ENCODE measurements at regions of chr11 and their contacts with region 1.

Region 1: DNA sequence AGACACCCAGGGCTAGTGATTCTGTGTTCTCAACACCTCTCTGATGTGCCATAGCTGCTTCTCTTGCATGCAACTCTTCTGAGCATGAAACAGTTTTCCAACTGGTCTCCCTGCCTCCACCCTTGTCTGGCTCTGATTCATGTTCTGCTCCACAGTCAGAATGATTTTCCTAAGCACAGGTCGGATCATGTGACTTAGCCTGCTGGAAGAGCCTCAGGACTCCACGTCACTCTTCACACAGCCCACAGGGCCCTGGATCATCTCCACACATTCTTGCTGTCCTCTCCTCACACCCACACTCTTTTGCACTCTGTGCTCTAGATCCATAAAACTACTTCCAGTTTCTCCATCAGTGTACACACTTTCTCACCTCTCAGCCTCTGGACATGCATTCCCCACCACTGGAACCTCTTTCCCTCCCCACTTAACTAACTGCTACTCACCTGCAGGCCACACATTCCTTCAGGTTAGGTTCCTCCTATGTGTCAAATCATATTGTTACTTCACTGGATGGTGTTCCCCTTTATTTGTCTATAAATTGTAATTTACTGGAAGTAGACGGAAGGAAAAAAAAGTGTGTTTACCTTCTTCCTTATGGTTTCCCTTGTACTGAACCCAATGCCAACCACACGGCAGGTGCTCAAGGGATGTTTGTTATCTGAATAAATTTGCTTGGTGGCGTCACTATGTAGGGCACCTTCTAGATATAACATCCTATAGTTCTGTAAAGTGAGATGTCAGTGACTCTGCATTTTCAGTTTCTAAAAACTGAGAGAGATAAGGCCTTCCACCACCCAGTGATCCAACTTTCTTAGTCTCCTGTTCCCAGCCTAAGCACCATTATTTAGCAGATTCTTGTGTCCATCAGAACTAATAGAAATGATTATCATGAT is 133.7 kb downstream of the ETS1 start:
- DNase-seq: peak; percentile 94
- H3K4me3 ChIP-seq: no peak overlapping the region
- H3K27ac ChIP-seq: peak overlapping the region; percentile 67
- H3K4me1 ChIP-seq: peaks cover 56% of the 10 kb centered on the region
- H3K27me3 ChIP-seq: no peaks in the 10 kb centered on the region
- CTCF ChIP-seq: no peak

Region 2: GRCh38 chr11:128180446-128181087 is 273.1 kb before region 1 on chr11:
- CTCF ChIA-PET with region 1: no interaction called
- dilution Hi-C with region 1: no loop called
- in situ Hi-C with region 1: loop called in 1 of 2 experiments (anchors 10 kb)
- intact Hi-C with region 1: no loop called
- DNase-seq: peak; percentile 89
- H3K4me3 ChIP-seq: no peak overlapping the region
- H3K27ac ChIP-seq: peak overlapping the region; percentile 45
- H3K4me1 ChIP-seq: peaks cover 22% of the 10 kb centered on the region
- H3K27me3 ChIP-seq: no peaks in the 10 kb centered on the region
- CTCF ChIP-seq: no peak

Region 3: DNA sequence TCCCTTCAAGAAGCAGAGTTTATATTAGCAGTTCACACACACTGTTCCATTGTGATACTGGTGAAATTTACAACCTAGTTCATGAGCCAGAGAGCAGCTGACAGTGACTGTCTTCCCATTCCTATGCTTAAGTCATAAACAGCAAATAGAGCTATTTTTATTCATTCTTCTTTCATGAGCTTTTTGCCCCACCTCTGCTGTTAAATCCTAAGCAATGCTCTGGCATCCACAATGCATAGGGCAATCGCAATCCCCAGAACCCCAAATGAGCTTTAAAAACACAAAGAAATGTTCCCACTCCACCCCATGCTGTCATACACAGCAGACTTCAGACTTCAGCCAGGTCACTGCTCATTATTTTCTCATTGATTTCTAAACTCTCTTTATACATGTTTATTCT is 173.8 kb before region 1 on chr11:
- CTCF ChIA-PET with region 1: no interaction called
- dilution Hi-C with region 1: no loop called
- in situ Hi-C with region 1: loop called in 1 of 2 experiments (anchors 10 kb)
- intact Hi-C with region 1: no loop called
- DNase-seq: peak; percentile 26
- H3K4me3 ChIP-seq: no peak overlapping the region
- H3K27ac ChIP-seq: peak overlapping the region; percentile 59
- H3K4me1 ChIP-seq: peaks cover 9% of the 10 kb centered on the region
- H3K27me3 ChIP-seq: no peaks in the 10 kb centered on the region
- CTCF ChIP-seq: no peak

Region 4: GRCh38 chr11:128346804-128347203 is 106.9 kb before region 1 on chr11:
- CTCF ChIA-PET with region 1: no interaction called
- dilution Hi-C with region 1: no loop called
- in situ Hi-C with region 1: no loop called
- intact Hi-C with region 1: no loop called
- DNase-seq: peak; percentile 80
- H3K4me3 ChIP-seq: no peak overlapping the region
- H3K27ac ChIP-seq: no peak overlapping the region
- H3K4me1 ChIP-seq: peaks cover 11% of the 10 kb centered on the region
- H3K27me3 ChIP-seq: no peaks in the 10 kb centered on the region
- CTCF ChIP-seq: no peak

Region 5: GRCh38 chr11:128361451-128362020 is 92.2 kb before region 1 on chr11:
- CTCF ChIA-PET with region 1: no interaction called
- dilution Hi-C with region 1: no loop called
- in situ Hi-C with region 1: no loop called
- intact Hi-C with region 1: no loop called
- DNase-seq: no peak
- H3K4me3 ChIP-seq: no peak overlapping the region
- H3K27ac ChIP-seq: no peak overlapping the region
- H3K4me1 ChIP-seq: no peaks in the 10 kb centered on the region
- H3K27me3 ChIP-seq: no peaks in the 10 kb centered on the region
- CTCF ChIP-seq: no peak

Measured in mammary epithelial cell (primary cell).